ENCODE measurements at regions of chrX and their contacts with region 1.

Region 1: GRCh38 chrX:118974088-118974907 is at the start of gene LONRF3:
- DNase-seq: peak in 2 of 3 donors; percentile 61 to 66
- H3K4me3 ChIP-seq: peak within 1 kb of the TSS in 5 of 7 experiments; percentile 23 to 50 (median 35)
- H3K27ac ChIP-seq: no peak within 1 kb of the TSS
- H3K4me1 ChIP-seq: peaks cover 0 to 35% (median 29%) of the 10 kb centered on the region in 4 experiments
- H3K27me3 ChIP-seq: peaks cover 2 to 63% (median 11%) of the 10 kb centered on the region in 5 experiments

Region 2: DNA sequence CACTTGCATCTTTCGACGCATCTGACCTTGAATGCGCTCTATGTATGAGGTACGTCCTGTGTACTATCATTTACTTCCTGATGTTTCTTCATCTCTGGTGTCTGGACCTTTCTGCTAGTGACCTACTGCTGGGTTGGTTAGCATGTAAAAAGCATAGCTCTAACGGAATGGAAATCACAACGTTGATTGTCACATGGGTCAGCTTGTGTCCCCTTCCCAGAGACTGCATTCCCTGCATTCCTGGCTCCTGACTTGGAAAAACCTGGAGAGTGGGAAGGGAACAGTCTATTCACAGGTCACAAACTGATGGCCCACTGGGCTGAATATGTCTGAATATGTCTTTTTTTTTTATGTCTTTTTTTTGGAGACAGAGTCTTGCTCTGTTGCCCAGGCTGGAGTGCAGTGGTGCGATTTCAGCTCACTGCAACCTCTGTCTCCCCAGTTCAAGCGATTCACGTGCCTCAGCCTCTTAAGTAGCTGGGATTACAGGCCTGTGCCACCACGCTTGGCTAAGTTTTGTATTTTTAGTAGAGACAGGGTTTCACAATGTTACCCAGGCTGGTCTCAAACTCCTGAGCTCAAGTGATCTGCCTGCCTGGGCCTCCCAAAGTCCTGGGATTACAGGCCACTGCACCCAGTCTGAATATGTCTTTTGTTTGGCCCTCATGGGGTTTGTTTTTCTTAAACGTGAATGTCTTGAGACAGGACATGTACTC is 16.4 kb after region 1 on chrX:
- CTCF ChIA-PET with region 1: interaction called, 11 read pairs
- POLR2A ChIA-PET with region 1: no interaction called
- DNase-seq: no peak
- H3K4me3 ChIP-seq: no peak overlapping the region
- H3K27ac ChIP-seq: no peak overlapping the region
- H3K4me1 ChIP-seq: no peaks in the 10 kb centered on the region
- H3K27me3 ChIP-seq: peaks cover 0 to 1% (median 0%) of the 10 kb centered on the region in 5 experiments

Measured in common myeloid progenitor, CD34-positive (primary cell).